ENCODE measurements at regions of chr7 and their contacts with region 1.

Region 1: DNA sequence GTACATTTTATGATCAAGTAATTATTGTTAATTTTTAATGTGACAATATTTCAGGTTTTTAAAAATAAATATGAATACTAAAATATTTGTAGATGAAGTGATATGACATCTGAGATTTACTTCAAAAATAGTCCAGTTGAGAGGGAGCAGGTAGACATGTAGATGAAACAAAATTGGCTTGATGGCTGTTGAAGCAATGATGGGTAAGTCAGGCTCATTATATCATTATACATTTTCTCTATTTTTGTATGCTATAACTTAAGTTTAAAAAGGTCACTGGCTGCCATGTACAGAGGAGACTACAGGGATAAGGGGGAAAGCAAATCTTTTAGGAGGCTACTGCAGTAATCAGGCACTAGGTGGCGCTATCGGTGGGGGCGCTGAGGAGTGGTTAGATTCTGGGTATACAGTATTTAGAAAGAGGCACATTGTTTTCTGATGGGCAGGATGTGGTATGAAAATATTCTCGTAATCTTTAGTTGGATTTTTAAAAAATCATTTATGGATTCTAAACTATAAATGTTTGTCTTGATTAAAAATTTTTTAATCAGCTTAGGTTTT is 189.8 kb upstream of the IMMP2L start:
- DNase-seq: peak; percentile 86
- H3K4me3 ChIP-seq: no peak overlapping the region
- H3K27ac ChIP-seq: no peak overlapping the region
- H3K4me1 ChIP-seq: no peaks in the 10 kb centered on the region
- H3K27me3 ChIP-seq: no peaks in the 10 kb centered on the region
- CTCF ChIP-seq: peak in 8 of 11 experiments; percentile 9 to 71 (median 64)
- POLR2A ChIP-seq: no peak

Region 2: GRCh38 chr7:112414855-112415490 is 662.9 kb after region 1 on chr7:
- intact Hi-C with region 1: loop called (anchors 10 kb)
- DNase-seq: no peak
- H3K4me3 ChIP-seq: no peak overlapping the region
- H3K27ac ChIP-seq: no peak overlapping the region
- H3K4me1 ChIP-seq: peaks cover 0 to 13% (median 0%) of the 10 kb centered on the region in 6 donors
- H3K27me3 ChIP-seq: peaks cover 0 to 6% (median 0%) of the 10 kb centered on the region in 7 donors
- CTCF ChIP-seq: peak in 8 of 11 experiments; percentile 14 to 55 (median 40)
- POLR2A ChIP-seq: no peak

Region 3: GRCh38 chr7:112495810-112496462 is 743.8 kb after region 1 on chr7:
- intact Hi-C with region 1: loop called (anchors 10 kb)
- DNase-seq: no peak
- H3K4me3 ChIP-seq: no peak overlapping the region
- H3K27ac ChIP-seq: no peak overlapping the region
- H3K4me1 ChIP-seq: no peaks in the 10 kb centered on the region
- H3K27me3 ChIP-seq: no peaks in the 10 kb centered on the region
- CTCF ChIP-seq: peak in 9 of 11 experiments; percentile 31 to 61 (median 46)
- POLR2A ChIP-seq: no peak

Measured in spleen (tissue), 13 donors.